Panc1 (cell line): ENCODE measurements at regions of chr5 and their contacts with region 1.

Region 1: DNA sequence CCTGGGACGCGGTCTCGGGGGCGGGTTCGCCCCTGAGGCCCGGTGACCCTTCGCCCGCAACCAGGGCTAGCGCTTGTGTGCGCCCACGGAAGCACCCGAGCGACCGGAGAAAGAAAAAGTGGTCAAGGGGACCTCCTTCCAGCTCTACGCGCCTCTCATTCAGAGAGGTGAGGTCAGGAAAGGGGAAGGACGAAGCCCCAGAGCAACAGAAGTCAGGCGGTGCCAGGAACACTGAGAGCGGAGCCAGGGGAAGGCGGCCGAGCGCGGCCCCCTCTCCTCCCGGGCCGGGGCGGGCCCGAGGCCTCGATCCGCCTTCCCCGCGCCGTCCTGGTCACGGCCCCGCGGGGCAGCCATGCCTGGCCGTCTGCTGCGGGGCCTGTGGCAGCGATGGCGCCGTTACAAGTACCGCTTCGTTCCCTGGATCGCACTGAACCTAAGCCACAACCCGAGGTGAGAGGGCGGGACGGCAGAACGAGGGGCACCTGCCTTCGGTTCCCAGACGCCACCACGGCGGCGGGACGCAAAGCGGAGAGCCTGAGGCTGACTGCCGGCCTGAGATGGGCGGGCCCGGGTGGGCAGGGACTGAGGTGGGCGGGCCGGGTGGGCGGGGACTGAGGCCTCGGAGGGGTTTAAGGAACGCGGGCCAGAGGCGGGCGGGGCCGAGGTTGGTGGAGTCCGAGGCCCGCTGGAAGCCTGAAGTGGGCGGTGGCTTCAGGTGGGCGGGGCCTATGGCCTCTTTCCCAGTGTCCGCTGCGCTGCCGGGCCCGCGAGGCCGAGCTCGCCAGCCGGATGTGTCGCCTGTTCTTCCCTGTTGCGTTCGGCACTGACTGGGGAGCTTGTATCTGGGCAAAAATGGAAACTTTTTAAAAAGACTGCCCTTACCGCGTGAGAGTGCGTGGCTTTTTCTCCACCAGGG is at the start of gene SETD9:
- DNase-seq: peak; percentile 82
- ATAC-seq: peak; percentile 96
- H3K4me3 ChIP-seq: peak within 1 kb of the TSS; percentile 77 to 98
- H3K27ac ChIP-seq: peak within 1 kb of the TSS; percentile 97
- H3K4me1 ChIP-seq: peaks cover 14% of the 10 kb centered on the region
- H3K27me3 ChIP-seq: no peaks in the 10 kb centered on the region
- CTCF ChIP-seq: no peak
- total RNA-seq, gene SETD9: 20.5 TPM

Region 2: GRCh38 chr5:56893251-56893951 is 16.2 kb before region 1 on chr5:
- CTCF ChIA-PET with region 1: no interaction called
- POLR2A ChIA-PET with region 1: no interaction called
- in situ Hi-C with region 1: no loop called
- intact Hi-C with region 1: no loop called
- DNase-seq: no peak
- ATAC-seq: no peak
- H3K4me3 ChIP-seq: no peak overlapping the region
- H3K27ac ChIP-seq: no peak overlapping the region
- H3K4me1 ChIP-seq: no peaks in the 10 kb centered on the region
- H3K27me3 ChIP-seq: no peaks in the 10 kb centered on the region
- CTCF ChIP-seq: no peak

Region 3: DNA sequence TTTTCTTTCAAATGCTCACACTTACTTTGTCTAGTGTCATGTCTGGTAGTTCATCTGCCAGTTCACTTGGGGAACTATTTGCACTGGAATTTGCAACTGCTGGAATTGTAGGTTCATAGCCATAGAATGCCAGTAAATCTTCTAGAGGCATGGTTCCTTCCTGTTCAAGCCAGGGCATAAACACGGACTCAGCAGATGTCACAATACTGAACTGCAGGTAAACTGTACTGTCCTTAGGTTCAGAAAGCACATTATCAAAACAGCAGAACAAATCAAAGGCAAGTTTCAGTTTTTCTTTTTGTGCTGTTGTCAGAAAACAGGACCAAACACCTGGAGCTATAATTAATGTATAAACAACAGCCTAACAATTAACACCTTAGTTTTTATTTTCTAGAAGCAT is 29.3 kb after region 1 on chr5:
- CTCF ChIA-PET with region 1: no interaction called
- POLR2A ChIA-PET with region 1: no interaction called
- in situ Hi-C with region 1: no loop called
- intact Hi-C with region 1: no loop called
- DNase-seq: no peak
- ATAC-seq: no peak
- H3K4me3 ChIP-seq: no peak overlapping the region
- H3K27ac ChIP-seq: no peak overlapping the region
- H3K4me1 ChIP-seq: no peaks in the 10 kb centered on the region
- H3K27me3 ChIP-seq: no peaks in the 10 kb centered on the region
- CTCF ChIP-seq: no peak

Region 4: DNA sequence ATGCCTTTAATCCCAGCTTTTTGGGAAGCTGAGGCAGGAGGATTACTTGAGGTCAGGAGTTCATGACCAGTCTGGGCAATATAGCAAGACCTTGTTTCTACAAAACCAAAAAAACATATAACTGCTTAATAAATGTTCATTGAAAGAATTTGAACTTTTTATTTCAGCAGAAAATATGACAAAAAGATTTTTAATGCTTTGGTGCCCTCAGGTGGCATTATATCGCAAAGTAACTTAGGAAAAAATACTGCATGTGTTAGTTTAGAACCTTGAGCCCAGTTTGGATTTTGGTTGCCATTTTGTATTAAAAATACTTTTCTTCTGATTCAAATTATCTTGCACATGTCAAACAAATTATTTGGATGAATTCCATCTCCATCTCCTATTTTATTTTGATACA is 367.5 kb after region 1 on chr5:
- CTCF ChIA-PET with region 1: no interaction called
- POLR2A ChIA-PET with region 1: no interaction called
- in situ Hi-C with region 1: no loop called
- intact Hi-C with region 1: loop called (anchors 5 kb)
- DNase-seq: no peak
- ATAC-seq: no peak; the same call in 1 of the 2 replicates
- H3K4me3 ChIP-seq: no peak overlapping the region
- H3K27ac ChIP-seq: no peak overlapping the region
- H3K4me1 ChIP-seq: no peaks in the 10 kb centered on the region
- H3K27me3 ChIP-seq: no peaks in the 10 kb centered on the region
- CTCF ChIP-seq: peak; percentile 53; the same call in 1 of the 2 replicates